ENCODE measurements at regions of chr19 and their contacts with region 1.

Region 1: GRCh38 chr19:11924886-11925650 is at the start of gene ZNF700:
- DNase-seq: peak; percentile 69
- H3K4me3 ChIP-seq: peak within 1 kb of the TSS; percentile 92
- H3K27ac ChIP-seq: peak within 1 kb of the TSS; percentile 47
- H3K27me3 ChIP-seq: no peaks in the 10 kb centered on the region
- CTCF ChIP-seq: no peak
- polyA plus RNA-seq, gene ZNF700: 6.6 and 8.4 TPM in 2 replicates

Region 2: DNA sequence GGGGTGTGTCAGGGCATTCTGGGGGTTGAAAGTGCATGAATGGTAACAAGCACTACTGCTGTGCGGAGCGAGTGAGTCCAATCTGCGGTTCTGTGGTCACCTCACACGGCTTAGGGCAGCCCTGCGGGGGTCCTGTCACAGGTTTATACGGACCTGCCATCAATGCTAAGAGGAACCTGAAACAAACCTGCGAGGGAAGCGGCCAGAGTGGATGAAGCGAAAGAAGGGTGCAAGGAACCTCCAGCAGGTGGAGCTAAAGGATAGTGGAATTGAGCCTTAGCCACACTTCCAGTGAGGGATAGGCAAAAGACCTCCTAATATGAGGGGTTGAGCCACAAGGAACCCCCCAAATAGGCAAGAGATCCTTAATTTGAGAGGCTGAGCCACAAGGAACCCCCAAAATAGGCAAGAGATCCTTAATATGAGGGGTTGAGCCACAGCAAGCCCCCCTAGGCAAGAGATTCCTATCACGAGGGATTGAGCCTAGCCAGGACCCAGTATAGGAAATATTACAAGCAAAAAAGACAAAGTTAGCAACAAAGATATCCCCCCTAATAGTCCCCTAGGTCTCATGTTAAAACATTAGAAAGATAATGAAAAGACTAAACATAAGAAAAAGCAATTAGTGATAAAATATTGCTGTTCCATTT is 43.8 kb before region 1 on chr19:
- CTCF ChIA-PET with region 1: interaction called, 17 read pairs
- POLR2A ChIA-PET with region 1: no interaction called
- DNase-seq: no peak
- H3K4me3 ChIP-seq: no peak overlapping the region
- H3K27ac ChIP-seq: no peak overlapping the region
- H3K27me3 ChIP-seq: peaks cover 4% of the 10 kb centered on the region
- CTCF ChIP-seq: peak; percentile 83

Region 3: DNA sequence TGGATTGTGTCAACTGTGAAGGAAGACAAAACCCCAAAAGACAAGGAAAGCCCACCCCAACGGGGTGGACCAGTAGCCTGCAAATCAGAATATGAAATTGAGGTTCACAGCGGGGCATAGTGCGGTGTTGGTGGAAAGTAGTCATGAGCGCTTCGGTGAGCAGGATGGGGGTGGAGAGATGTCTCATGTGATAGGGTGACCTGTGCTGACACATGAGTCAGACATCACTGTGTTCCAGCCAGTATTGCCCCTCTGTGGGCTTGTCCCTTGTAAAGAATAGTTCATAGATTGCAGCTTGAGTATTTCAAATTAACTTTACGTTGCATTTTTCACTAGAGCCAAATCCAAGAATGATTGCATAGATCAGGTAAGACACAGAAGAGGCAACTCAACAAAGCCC is 30.2 kb before region 1 on chr19:
- CTCF ChIA-PET with region 1: no interaction called
- POLR2A ChIA-PET with region 1: no interaction called
- DNase-seq: no peak
- H3K4me3 ChIP-seq: no peak overlapping the region
- H3K27ac ChIP-seq: no peak overlapping the region
- H3K27me3 ChIP-seq: no peaks in the 10 kb centered on the region
- CTCF ChIP-seq: no peak

Region 4: DNA sequence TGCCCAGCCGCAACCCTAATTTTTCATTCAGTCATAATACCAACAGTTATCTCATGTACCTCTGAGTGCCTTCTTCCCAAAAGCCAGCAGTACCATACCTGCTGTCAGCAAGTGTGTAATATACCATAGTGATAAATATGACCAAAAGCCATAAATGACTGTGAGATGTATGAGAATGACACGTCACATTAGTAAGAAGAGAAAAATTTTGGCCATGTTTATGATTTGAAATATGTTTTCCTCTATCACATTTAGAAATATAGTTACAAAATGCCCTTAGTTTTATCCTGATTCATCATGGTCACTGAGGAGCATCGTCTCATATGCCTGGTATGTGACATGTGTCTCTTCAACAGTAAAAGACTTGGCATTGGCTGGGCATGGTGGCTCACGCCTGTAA is 11.4 kb before region 1 on chr19:
- CTCF ChIA-PET with region 1: interaction called, 10 read pairs
- POLR2A ChIA-PET with region 1: no interaction called
- DNase-seq: no peak
- H3K4me3 ChIP-seq: no peak overlapping the region
- H3K27ac ChIP-seq: no peak overlapping the region
- H3K27me3 ChIP-seq: no peaks in the 10 kb centered on the region
- CTCF ChIP-seq: no peak

Region 5: GRCh38 chr19:11987405-11988281 is 62.6 kb after region 1 on chr19:
- CTCF ChIA-PET with region 1: interaction called, 68 read pairs
- POLR2A ChIA-PET with region 1: interaction called, 11 read pairs
- DNase-seq: peak; percentile 78
- H3K4me3 ChIP-seq: peak overlapping the region; percentile 85
- H3K27ac ChIP-seq: peak overlapping the region; percentile 73
- H3K27me3 ChIP-seq: no peaks in the 10 kb centered on the region
- CTCF ChIP-seq: no peak

Region 6: GRCh38 chr19:12139885-12140547 is 214.9 kb after region 1 on chr19 and contains the start of gene ZNF20:
- CTCF ChIA-PET with region 1: interaction called, 16 read pairs
- POLR2A ChIA-PET with region 1: interaction called, 4 read pairs
- DNase-seq: peak; percentile 78
- H3K4me3 ChIP-seq: peak within 1 kb of the TSS; percentile 75
- H3K27ac ChIP-seq: peak within 1 kb of the TSS; percentile 66
- H3K27me3 ChIP-seq: no peaks in the 10 kb centered on the region
- CTCF ChIP-seq: no peak
- polyA plus RNA-seq, gene ZNF20: 2.4 and 2.7 TPM in 2 replicates

Measured in AG04450 (cell line).